ENCODE measurements at regions of chr6 and their contacts with region 1.

Region 1: DNA sequence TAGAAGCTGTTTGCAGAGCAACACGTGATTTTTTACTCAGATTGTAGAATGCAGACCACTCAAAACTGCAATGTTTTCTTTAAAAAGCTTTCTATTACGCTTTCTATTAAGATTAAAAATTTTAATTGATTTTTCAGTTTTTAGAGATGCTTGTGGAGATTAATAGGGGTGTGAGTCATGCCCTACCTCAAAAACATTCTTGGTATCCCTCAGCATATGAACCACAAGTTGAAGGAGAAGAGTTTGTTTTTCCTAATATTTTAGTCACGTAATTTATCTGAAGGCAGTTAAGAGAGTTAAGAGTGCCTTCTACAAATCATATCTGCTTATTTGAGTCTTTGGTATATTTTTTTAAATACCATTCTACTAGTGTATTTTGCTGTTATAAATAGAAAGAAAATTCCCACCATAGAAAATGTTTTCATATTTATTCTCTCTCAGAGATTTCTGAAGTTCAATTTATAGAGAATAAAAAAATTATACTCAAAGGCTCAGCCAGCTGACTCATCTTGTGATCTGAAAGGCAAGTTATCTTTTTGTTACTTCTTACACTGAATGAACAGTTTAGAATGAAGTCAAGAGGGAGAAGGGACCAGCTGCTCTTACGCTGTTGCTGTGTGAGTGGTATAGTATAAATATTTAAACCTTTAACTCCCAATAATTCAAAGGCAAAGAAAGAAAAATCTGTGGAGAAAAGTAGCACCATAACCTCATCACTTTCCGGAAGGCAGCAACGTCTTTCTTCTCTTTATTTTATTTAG is 7.6 kb downstream of the RIPOR2 start:
- DNase-seq: no peak
- H3K4me3 Mint-ChIP-seq: peak overlapping the region; percentile 90
- H3K27ac Mint-ChIP-seq: peak overlapping the region; percentile 96
- H3K4me1 Mint-ChIP-seq: peaks cover 77% of the 10 kb centered on the region
- H3K27me3 Mint-ChIP-seq: no peaks in the 10 kb centered on the region

Region 2: DNA sequence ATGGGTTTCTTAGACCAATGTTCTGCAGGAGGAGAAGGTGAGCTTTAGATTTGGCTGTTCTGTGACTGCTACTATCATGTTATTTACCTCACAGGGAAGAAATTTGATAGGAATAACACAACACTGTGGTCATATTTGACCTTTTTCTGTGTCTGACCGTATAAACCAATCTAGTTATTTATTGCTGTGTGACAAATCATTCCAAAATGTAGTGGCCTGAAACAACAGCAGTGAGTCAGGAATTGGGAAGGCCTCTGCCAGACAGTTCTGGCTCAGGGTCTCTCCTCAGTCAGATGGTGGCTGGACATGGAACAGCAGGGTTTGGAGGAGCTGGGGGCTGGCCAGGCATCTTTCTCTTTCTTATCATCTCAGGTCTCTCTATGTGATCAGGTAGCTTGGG is 25.4 kb before region 1 on chr6:
- CTCF ChIA-PET with region 1: interaction called, 32 read pairs
- intact Hi-C with region 1: loop called (anchors 1 kb)
- DNase-seq: no peak
- H3K4me3 Mint-ChIP-seq: no peak overlapping the region
- H3K27ac Mint-ChIP-seq: peak overlapping the region; percentile 84
- H3K4me1 Mint-ChIP-seq: peaks cover 90% of the 10 kb centered on the region
- H3K27me3 Mint-ChIP-seq: no peaks in the 10 kb centered on the region

Region 3: GRCh38 chr6:24910961-24911712 is 17.0 kb before region 1 on chr6:
- CTCF ChIA-PET with region 1: interaction called, 129 read pairs
- intact Hi-C with region 1: loop called (anchors 1 kb)
- DNase-seq: peak; percentile 70
- H3K4me3 Mint-ChIP-seq: peak overlapping the region; percentile 92
- H3K27ac Mint-ChIP-seq: peak overlapping the region; percentile 96
- H3K4me1 Mint-ChIP-seq: peaks cover 76% of the 10 kb centered on the region
- H3K27me3 Mint-ChIP-seq: no peaks in the 10 kb centered on the region

Region 4: GRCh38 chr6:24949020-24949569 is 20.9 kb after region 1 on chr6:
- CTCF ChIA-PET with region 1: interaction called, 64 read pairs
- intact Hi-C with region 1: loop called (anchors 1 kb)
- DNase-seq: peak; percentile 51
- H3K4me3 Mint-ChIP-seq: peak overlapping the region; percentile 61
- H3K27ac Mint-ChIP-seq: peak overlapping the region; percentile 89
- H3K4me1 Mint-ChIP-seq: peaks cover 63% of the 10 kb centered on the region
- H3K27me3 Mint-ChIP-seq: no peaks in the 10 kb centered on the region